ENCODE measurements at regions of chr17 and their contacts with region 1.

Region 1: DNA sequence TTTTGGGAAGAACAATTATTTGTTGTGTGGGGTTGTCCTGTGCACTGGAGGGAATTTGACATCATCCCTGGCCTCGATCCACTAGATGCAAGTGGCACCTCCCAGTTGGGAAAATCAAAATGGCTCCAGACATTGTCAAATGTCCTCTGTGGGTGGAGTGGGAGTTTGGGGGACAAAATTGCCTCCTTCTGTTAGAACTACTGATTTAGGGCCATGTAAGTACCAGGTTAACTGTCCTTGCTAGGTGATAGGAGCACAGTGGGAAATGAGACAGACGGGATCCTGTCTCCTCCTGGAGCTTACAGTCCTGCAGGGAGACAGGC is 56.8 kb downstream of the ARHGAP23 start:
- DNase-seq: no peak

Region 2: GRCh38 chr17:38428112-38428642 is 56.9 kb before region 1 on chr17 and contains the start of gene ARHGAP23:
- intact Hi-C with region 1: loop called in 1 of 2 experiments (anchors 5 kb)
- DNase-seq: peak; percentile 87
- total RNA-seq, gene ARHGAP23: 72.9 to 90.4 TPM

Region 3: DNA sequence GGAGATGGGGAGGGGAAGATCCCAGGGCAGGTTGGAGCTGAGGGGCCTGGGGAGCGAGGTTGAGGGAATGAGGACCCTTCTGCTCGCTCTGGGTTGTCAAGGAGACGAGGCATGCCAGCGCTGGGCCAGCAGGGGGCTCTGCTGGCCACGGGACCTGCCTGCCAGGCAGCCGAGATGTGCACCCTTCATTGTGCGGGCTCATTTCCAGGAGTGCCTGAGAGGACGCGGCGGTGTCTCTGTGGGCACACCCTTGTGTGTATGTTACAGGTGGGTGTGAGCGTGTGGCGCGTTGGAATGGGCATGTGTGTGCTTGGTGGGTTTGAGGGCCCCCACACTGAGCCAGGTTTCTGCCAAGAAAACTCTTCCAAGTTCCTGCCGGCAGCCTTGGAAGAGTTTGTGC is 41.0 kb before region 1 on chr17:
- intact Hi-C with region 1: loop called in 1 of 2 experiments (anchors 5 kb)
- DNase-seq: no peak

Measured in posterior vena cava (tissue), 2 donors.